Ascending aorta (tissue), 2 donors: ENCODE measurements at regions of chr18 and their contacts with region 1.

Region 1: GRCh38 chr18:62714671-62715435 is 488 bp upstream of the PHLPP1 start:
- DNase-seq: peak; percentile 98 to 100
- H3K4me3 ChIP-seq: peak overlapping the region; percentile 78 to 81
- H3K27ac ChIP-seq: peak overlapping the region; percentile 93 to 95
- H3K4me1 ChIP-seq: peaks cover 0 to 5% of the 10 kb centered on the region in 2 donors
- H3K27me3 ChIP-seq: no peaks in the 10 kb centered on the region
- CTCF ChIP-seq: peak; percentile 56 to 80 (median 78)

Region 2: DNA sequence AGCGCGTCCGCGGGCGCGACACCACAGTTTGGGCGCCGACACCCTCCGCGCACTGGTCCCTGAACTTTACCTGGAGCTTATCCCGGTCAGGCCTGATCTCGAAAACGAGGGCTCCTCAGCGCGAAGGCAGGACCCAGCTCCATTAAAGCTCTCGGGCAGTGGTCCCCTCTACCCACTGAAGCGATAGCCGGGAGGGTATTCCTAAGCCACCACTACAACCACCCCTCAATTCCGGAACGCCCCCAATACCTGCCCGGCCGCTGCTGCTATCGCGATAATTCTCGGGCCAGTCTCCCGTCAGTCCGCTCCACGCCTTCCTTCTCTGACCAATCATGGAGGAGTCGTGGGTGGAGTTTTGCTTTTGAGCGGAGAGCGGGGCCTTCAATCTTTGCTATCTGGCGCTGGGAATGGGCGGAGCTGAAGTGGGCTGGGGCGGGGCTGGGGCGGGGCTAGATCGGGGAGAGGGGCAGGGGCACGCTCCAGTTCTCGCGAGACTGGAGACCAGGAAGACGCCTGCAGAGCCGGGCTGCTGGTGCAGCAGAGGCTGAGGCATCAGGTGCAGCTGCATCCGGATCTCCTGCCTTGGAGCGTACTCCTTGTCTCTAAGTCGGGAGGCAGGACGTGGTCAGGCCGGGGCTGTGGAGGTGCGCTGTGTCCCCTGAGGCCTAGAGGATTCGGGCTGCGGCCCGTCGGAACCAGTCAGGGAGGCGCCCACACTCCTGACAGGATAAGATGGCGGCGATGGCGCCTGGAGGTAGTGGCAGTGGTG is 527.9 kb before region 1 on chr18 and contains the starts of genes PIGN and RELCH:
- intact Hi-C with region 1: loop called (anchors 2 kb)
- DNase-seq: peak; percentile 96 to 99
- H3K4me3 ChIP-seq: peak within 1 kb of the TSS; percentile 79 to 98
- H3K27ac ChIP-seq: peak within 1 kb of the TSS; percentile 75 to 82
- H3K4me1 ChIP-seq: peaks cover 0 to 28% of the 10 kb centered on the region in 2 donors
- H3K27me3 ChIP-seq: no peaks in the 10 kb centered on the region
- CTCF ChIP-seq: no peak
- total RNA-seq, gene PIGN: 12.8 TPM
- total RNA-seq, gene RELCH: 26.4 TPM

Region 3: GRCh38 chr18:62584241-62585120 is 130.4 kb before region 1 on chr18:
- intact Hi-C with region 1: loop called (anchors 10 kb)
- DNase-seq: peak; percentile 51 to 90
- H3K4me3 ChIP-seq: peak overlapping the region in 1 of 2 donors; percentile 42
- H3K27ac ChIP-seq: peak overlapping the region in 1 of 2 donors; percentile 59
- H3K4me1 ChIP-seq: peaks cover 0 to 4% of the 10 kb centered on the region in 2 donors
- H3K27me3 ChIP-seq: no peaks in the 10 kb centered on the region
- CTCF ChIP-seq: peak; percentile 92 to 95 (median 93)

Region 4: GRCh38 chr18:62957885-62958472 is 243.1 kb after region 1 on chr18:
- intact Hi-C with region 1: loop called (anchors 1 kb)
- DNase-seq: no peak
- H3K4me3 ChIP-seq: no peak overlapping the region
- H3K27ac ChIP-seq: no peak overlapping the region
- H3K4me1 ChIP-seq: no peaks in the 10 kb centered on the region
- H3K27me3 ChIP-seq: no peaks in the 10 kb centered on the region
- CTCF ChIP-seq: peak; percentile 16 to 44 (median 26)

Region 5: DNA sequence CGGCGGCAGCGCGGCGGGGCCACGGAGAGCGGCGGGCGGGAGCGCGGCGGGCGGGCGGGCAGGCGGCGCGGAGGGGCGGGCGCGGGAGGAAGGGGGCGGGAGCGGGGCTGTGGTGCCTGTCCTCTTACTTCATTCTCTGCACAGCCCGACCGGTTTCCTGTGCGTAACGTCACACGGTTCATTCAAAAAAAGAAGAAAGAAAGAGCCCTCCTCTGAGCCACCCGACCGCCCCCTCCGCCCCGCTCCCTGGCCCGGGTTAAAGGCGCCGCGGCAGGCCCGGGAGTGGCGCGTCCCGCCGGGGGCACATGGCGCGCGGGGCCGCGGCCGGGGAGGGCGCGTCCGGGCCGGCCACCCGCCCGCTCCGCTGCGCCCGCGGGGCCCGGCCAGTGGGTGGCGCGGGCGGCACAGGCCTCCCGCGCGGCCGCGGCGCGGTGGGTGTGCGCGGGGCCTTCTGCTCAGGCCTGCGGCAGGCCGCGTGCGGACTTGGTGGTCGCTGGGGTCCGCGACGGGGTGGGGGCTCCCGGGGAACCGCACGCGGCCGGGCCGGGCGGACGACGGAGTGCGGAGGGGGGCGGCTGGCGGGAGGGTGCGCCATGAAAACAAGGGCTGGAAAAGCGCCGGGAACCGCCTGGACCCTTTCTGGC is 605.3 kb after region 1 on chr18:
- intact Hi-C with region 1: loop called (anchors 10 kb)
- DNase-seq: peak; percentile 66 to 94
- H3K4me3 ChIP-seq: peak overlapping the region; percentile 56 to 68
- H3K27ac ChIP-seq: peak overlapping the region; percentile 87 to 95
- H3K4me1 ChIP-seq: peaks cover 3 to 6% of the 10 kb centered on the region in 2 donors
- H3K27me3 ChIP-seq: no peaks in the 10 kb centered on the region
- CTCF ChIP-seq: peak in 1 of 3 experiments; percentile 31

Region 6: DNA sequence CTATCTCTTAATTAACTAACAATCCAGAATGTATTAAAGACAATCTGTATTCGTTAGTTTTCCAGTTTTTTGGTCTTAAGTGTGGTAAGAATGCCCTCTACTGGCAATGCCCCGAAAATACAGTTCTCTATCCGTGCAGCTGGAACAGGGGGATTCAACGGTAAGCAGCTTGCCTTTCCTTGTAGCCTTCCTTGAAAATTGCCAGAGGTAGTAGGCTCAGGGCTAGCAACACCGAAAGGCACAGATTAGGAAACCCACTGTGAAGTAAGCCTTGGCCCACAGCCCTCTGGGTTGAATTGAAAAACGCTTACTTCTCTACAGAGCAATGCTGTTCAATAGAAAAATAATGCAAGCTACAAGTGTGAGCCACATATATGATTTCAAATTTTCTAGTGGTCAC is 724.5 kb after region 1 on chr18:
- intact Hi-C with region 1: loop called (anchors 5 kb)
- DNase-seq: peak in 1 of 2 donors; percentile 74
- H3K4me3 ChIP-seq: no peak overlapping the region
- H3K27ac ChIP-seq: no peak overlapping the region
- H3K4me1 ChIP-seq: peaks cover 0 to 12% of the 10 kb centered on the region in 2 donors
- H3K27me3 ChIP-seq: no peaks in the 10 kb centered on the region
- CTCF ChIP-seq: peak; percentile 56 to 79 (median 63)